GM18951 (cell line): ENCODE measurements at regions of chr20 and their contacts with region 1.

Region 1: GRCh38 chr20:58907399-58908137 is 55.1 kb downstream of the GNAS start:
- POLR2A ChIP-seq: peak; percentile 33

Region 2: DNA sequence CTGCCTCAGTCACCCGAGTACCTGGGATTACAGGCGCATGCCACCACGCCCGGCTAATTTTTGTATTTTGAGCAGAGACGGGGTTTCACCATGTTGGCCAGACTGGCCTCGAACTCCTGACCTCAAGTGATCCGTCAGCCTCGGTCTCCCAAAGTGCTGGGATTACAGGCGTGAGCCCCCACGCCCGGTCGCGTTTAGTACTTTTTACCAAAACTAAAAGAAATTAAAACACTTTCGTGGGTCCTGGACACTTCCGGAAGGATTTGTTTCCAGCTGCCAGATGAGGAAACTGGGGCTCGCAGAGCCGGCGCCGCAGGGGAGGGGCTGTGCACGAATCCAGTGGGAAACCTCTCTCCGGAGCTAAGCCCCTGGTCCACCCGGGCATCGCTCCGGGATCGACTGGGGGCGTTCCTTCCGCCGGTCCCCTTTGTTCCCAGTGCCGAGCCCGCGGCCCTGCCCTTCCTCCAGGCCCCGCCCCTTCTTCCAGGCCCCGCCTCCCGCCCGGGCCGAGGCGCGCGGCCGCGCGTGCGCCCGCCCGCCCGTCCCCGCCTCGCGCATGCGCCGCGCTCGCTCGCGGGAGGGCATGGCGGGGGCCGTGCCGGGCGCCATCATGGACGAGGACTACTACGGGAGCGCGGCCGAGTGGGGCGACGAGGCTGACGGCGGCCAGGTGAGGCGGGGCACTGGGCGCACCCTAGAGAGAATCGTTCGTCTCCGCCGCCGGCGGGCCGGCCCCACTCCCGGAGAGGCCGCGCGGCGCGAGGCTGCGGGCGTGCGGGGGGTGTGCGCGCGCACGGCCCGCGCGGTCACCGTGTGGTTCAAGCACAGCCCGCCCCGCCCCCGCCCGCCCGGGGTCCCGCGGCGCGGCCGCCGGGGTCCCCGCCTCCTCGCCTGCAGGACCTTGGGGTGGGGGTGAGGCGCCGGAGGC is 73.4 kb after region 1 on chr20 and contains the start of gene NELFCD:
- in situ Hi-C with region 1: loop called (anchors 10 kb)
- POLR2A ChIP-seq: peak; percentile 91